ENCODE measurements at regions of chr17 and their contacts with region 1.

Region 1: DNA sequence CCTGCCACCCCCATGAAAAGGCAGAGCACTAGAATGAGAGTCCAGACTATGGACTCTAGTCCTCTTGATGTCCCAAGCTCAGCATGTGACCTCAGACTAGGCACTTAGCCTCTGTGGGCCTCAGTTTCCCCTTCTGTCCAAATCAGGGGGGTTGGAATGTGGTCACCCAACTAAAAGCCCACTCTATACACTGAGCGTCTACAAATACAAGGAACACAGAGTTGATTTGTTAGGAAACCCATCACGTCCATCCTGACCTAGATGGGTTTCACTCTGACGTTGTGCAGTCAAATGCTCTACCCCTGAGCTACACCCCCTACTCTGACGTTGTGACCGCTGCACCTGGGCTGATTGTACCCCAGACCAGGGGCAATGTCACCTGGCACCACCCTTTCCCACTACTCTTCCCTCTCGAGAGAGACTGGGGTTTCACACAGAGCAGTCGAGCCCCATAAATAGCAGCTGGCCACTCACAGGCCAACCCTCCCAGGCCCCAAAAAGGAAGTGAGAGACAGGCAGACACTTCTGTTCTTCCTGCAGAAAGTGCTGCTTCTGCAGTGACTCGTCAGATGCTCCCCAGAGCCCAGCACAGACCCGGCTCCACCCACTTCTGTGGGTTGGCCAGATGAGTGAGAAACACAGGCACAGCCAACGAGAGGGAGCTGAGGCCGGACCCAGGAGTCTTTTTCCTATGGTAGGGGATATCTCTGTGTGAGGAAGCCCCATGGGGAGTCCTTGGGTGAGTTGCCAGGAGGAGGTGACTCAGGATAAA is 16.1 kb upstream of the TNFRSF13B start:
- DNase-seq: peak; percentile 91
- ATAC-seq: peak; percentile 93
- H3K4me3 Mint-ChIP-seq: peak overlapping the region; percentile 61
- H3K27ac Mint-ChIP-seq: peak overlapping the region; percentile 98
- H3K4me1 Mint-ChIP-seq: peaks cover 38% of the 10 kb centered on the region
- H3K27me3 Mint-ChIP-seq: no peaks in the 10 kb centered on the region

Region 2: GRCh38 chr17:16915752-16916556 is 72.1 kb before region 1 on chr17:
- CTCF ChIA-PET with region 1: interaction called, 14 read pairs
- DNase-seq: peak; percentile 61
- ATAC-seq: peak; percentile 70
- H3K4me3 Mint-ChIP-seq: no peak overlapping the region
- H3K27ac Mint-ChIP-seq: no peak overlapping the region
- H3K4me1 Mint-ChIP-seq: no peaks in the 10 kb centered on the region
- H3K27me3 Mint-ChIP-seq: peaks cover 15% of the 10 kb centered on the region

Region 3: GRCh38 chr17:16922386-16923104 is 65.5 kb before region 1 on chr17:
- CTCF ChIA-PET with region 1: interaction called, 14 read pairs
- DNase-seq: no peak
- ATAC-seq: no peak
- H3K4me3 Mint-ChIP-seq: no peak overlapping the region
- H3K27ac Mint-ChIP-seq: no peak overlapping the region
- H3K4me1 Mint-ChIP-seq: no peaks in the 10 kb centered on the region
- H3K27me3 Mint-ChIP-seq: no peaks in the 10 kb centered on the region

Region 4: DNA sequence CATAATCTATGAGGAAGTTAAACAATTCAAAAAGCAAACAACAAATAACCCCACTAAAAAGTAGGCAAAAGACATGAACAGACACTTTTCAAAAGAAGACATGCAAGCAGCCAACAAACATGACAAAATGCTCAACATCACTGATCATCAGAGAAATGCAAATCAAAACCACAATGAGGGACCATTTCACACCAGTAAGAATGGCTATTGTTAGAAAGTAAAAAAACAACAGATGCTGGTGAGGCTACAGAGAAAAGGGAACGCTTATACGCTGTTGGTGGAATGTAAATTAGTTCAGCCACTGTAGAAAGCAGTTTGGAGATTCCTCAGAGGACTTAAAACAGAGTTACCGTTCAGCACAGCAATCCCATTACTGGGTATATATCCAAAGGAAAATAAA is 40.5 kb before region 1 on chr17:
- CTCF ChIA-PET with region 1: no interaction called
- DNase-seq: no peak
- ATAC-seq: no peak
- H3K4me3 Mint-ChIP-seq: no peak overlapping the region
- H3K27ac Mint-ChIP-seq: no peak overlapping the region
- H3K4me1 Mint-ChIP-seq: no peaks in the 10 kb centered on the region
- H3K27me3 Mint-ChIP-seq: peaks cover 2% of the 10 kb centered on the region

Region 5: GRCh38 chr17:17075038-17075781 is 87.2 kb after region 1 on chr17:
- CTCF ChIA-PET with region 1: no interaction called
- DNase-seq: no peak
- ATAC-seq: peak; percentile 27
- H3K4me3 Mint-ChIP-seq: no peak overlapping the region
- H3K27ac Mint-ChIP-seq: no peak overlapping the region
- H3K4me1 Mint-ChIP-seq: peaks cover 24% of the 10 kb centered on the region
- H3K27me3 Mint-ChIP-seq: no peaks in the 10 kb centered on the region